ENCODE measurements at regions of chr16 and their contacts with region 1.

Region 1: DNA sequence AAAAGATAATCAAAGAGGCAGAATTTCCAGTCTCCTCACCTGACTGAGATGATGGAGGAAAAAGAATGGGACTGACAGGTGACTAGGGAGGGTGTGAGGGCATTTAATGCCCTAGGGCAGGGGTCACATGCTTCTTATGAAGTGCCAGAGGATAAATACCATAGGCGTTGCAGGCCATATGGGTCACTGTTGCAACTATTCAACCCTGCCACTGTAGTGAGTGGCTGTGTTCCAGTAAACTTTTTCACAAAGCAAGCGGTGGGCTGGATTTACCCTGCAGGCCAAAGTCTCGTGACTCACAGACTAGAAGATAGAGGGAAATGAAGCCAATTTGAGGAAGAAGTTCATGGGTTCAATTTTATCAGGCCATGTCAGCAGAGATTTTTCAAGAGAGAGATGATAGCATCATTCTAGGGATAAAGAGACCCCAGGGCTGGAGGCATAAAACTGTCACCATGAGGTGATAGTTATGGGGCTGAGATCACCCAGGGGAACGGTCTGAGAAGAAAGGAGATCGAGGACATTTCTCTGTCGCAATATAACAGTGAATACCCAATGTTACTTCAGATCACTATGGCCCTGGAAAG is 8.6 kb downstream of the ARHGAP17 start:
- DNase-seq: no peak
- ATAC-seq: peak; percentile 44
- H3K4me3 ChIP-seq: peak overlapping the region; percentile 24; the same call in 1 of the 2 replicates
- H3K27ac ChIP-seq: no peak overlapping the region
- H3K4me1 ChIP-seq: peaks cover 49% of the 10 kb centered on the region
- H3K27me3 ChIP-seq: no peaks in the 10 kb centered on the region
- CTCF ChIP-seq: no peak
- EP300 ChIP-seq: no peak
- POLR2A ChIP-seq: no peak
- RAD21 ChIP-seq: no peak

Region 2: DNA sequence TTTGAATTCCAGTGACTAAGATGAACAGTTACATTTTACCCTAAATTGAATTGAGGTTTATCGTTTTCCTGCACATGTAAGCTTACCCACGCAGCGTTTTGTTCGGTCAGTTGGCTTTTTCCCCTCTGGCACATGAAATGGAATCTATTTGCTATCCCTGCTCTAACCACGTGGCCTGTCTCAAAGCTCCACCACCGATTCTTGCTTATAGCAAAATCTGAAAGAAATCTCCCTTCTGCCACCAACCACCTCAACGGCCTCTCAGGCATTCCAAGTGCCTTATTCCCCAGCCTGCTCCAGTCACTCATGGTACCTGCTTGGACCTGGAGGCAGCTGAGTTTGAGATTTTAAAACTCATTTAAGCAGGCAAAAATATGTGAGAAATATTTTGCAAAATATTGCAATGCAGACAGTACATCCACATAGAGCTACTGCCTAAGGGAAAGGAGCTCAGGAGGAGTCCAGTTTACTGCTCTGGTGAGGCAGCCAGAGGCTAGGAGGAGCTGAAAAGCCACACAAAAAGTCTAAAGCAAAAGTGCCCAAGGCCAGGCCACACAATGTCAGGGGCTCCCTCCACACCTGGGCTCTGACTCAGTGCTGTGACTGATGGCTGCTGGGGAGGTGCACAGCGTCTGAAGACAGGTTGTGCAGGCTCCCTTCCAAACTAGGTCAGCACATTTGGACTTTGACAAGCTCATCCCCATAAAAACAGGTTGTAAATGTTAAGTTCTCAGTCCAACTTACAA is 17.8 kb before region 1 on chr16:
- CTCF ChIA-PET with region 1: no interaction called
- POLR2A ChIA-PET with region 1: interaction called, 7 read pairs
- RAD21 ChIA-PET with region 1: interaction called, 4 read pairs
- SMC1A ChIA-PET with region 1: interaction called, 42 read pairs
- in situ Hi-C with region 1: no loop called
- intact Hi-C with region 1: no loop called
- DNase-seq: no peak
- ATAC-seq: peak; percentile 32
- H3K4me3 ChIP-seq: no peak overlapping the region
- H3K27ac ChIP-seq: no peak overlapping the region
- H3K4me1 ChIP-seq: peaks cover 51% of the 10 kb centered on the region
- H3K27me3 ChIP-seq: no peaks in the 10 kb centered on the region
- CTCF ChIP-seq: no peak
- EP300 ChIP-seq: no peak
- POLR2A ChIP-seq: no peak
- RAD21 ChIP-seq: no peak

Region 3: GRCh38 chr16:25020112-25020631 is 13.6 kb after region 1 on chr16:
- CTCF ChIA-PET with region 1: interaction called, 3 read pairs
- POLR2A ChIA-PET with region 1: interaction called, 8 read pairs
- RAD21 ChIA-PET with region 1: interaction called, 13 read pairs
- SMC1A ChIA-PET with region 1: interaction called, 10 read pairs
- in situ Hi-C with region 1: no loop called
- intact Hi-C with region 1: no loop called
- DNase-seq: no peak
- ATAC-seq: peak; percentile 19
- H3K4me3 ChIP-seq: peak overlapping the region; percentile 36
- H3K27ac ChIP-seq: peak overlapping the region; percentile 72
- H3K4me1 ChIP-seq: peaks cover 37% of the 10 kb centered on the region
- H3K27me3 ChIP-seq: no peaks in the 10 kb centered on the region
- CTCF ChIP-seq: no peak
- EP300 ChIP-seq: no peak; a peak in 2 of 4 replicates
- POLR2A ChIP-seq: no peak
- RAD21 ChIP-seq: no peak

Region 4: DNA sequence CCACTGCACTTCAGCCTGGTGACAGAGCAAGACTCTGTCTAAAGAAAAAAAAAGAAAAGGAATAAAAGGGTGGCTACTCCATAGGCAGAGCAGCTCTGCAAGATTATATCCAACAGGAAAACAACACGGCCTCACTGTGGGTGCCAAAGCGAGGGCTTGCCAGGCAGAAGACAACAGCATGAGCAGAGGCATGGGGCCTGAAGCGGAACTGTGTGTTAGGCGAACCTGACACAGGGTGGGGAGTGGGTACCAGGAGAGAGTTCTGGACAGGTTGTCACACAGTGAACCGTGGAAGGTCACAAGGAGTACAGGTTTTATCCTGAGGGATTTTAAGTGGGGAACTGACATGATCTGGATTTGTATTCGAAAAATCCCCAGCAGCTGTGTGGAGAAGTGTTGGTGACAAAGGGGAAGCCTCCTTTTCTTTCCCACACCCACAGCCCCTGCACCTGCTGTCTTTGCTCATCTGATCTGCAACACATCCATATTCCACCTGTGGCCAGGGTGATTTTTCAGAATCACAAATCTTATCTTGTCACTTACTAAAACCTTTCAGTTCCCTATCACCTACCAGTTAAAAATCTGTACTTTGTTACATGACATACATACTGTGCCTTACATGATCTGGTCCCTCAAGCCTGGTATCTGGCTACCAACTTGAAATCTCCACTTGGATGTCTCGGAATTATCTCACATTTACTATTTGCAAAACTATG is 31.8 kb after region 1 on chr16:
- CTCF ChIA-PET with region 1: no interaction called
- POLR2A ChIA-PET with region 1: interaction called, 6 read pairs
- RAD21 ChIA-PET with region 1: interaction called, 3 read pairs
- SMC1A ChIA-PET with region 1: interaction called, 161 read pairs
- in situ Hi-C with region 1: no loop called
- intact Hi-C with region 1: no loop called
- DNase-seq: no peak
- ATAC-seq: peak; percentile 78
- H3K4me3 ChIP-seq: no peak overlapping the region
- H3K27ac ChIP-seq: peak overlapping the region; percentile 64
- H3K4me1 ChIP-seq: peaks cover 50% of the 10 kb centered on the region
- H3K27me3 ChIP-seq: no peaks in the 10 kb centered on the region
- CTCF ChIP-seq: no peak
- EP300 ChIP-seq: peak; percentile 74 to 85; a peak in 3 of 4 replicates
- POLR2A ChIP-seq: no peak
- RAD21 ChIP-seq: no peak